T-cell (primary cell): ENCODE measurements at regions of chr13 and their contacts with region 1.

Region 1: GRCh38 chr13:74036373-74036772 is 97.8 kb downstream of the KLF12 start:
- DNase-seq: no peak
- ATAC-seq: no peak
- H3K4me3 ChIP-seq: no peak overlapping the region
- H3K4me3 Mint-ChIP-seq: no peak overlapping the region
- H3K27ac ChIP-seq: no peak overlapping the region
- H3K27ac Mint-ChIP-seq: peak overlapping the region; percentile 58 to 73
- H3K4me1 ChIP-seq: peaks cover 6 to 13% of the 10 kb centered on the region in 2 experiments
- H3K4me1 Mint-ChIP-seq: peaks cover 70 to 74% (median 71%) of the 10 kb centered on the region in 3 donors
- H3K27me3 ChIP-seq: no peaks in the 10 kb centered on the region
- H3K27me3 Mint-ChIP-seq: no peaks in the 10 kb centered on the region

Region 2: GRCh38 chr13:73955977-73956500 is 80.3 kb before region 1 on chr13:
- CTCF ChIA-PET with region 1: no interaction called
- POLR2A ChIA-PET with region 1: interaction called in 1 of 2 experiments, 29 read pairs
- DNase-seq: no peak
- ATAC-seq: no peak
- H3K4me3 ChIP-seq: no peak overlapping the region
- H3K4me3 Mint-ChIP-seq: no peak overlapping the region
- H3K27ac ChIP-seq: no peak overlapping the region
- H3K27ac Mint-ChIP-seq: peak overlapping the region; percentile 23 to 34
- H3K4me1 ChIP-seq: peaks cover 5 to 10% of the 10 kb centered on the region in 2 experiments
- H3K4me1 Mint-ChIP-seq: peaks cover 48 to 70% (median 70%) of the 10 kb centered on the region in 3 donors
- H3K27me3 ChIP-seq: no peaks in the 10 kb centered on the region
- H3K27me3 Mint-ChIP-seq: no peaks in the 10 kb centered on the region